MCF 10A (cell line): ENCODE measurements at regions of chr6 and their contacts with region 1.

Region 1: GRCh38 chr6:162560891-162561290 is 166.7 kb downstream of the PRKN start:
- DNase-seq: no peak
- H3K4me3 Mint-ChIP-seq: no peak overlapping the region
- H3K27ac Mint-ChIP-seq: no peak overlapping the region
- H3K4me1 Mint-ChIP-seq: no peaks in the 10 kb centered on the region
- H3K27me3 Mint-ChIP-seq: no peaks in the 10 kb centered on the region
- CTCF ChIP-seq: no peak

Region 2: GRCh38 chr6:162727309-162728182 is 166.7 kb after region 1 on chr6 and contains the starts of genes PACRG and PRKN:
- CTCF ChIA-PET with region 1: interaction called, 4 read pairs
- POLR2A ChIA-PET with region 1: no interaction called
- intact Hi-C with region 1: loop called (anchors 5 kb)
- DNase-seq: peak; percentile 98
- H3K4me3 Mint-ChIP-seq: peak within 1 kb of the TSS; percentile 86
- H3K27ac Mint-ChIP-seq: peak within 1 kb of the TSS; percentile 97
- H3K4me1 Mint-ChIP-seq: peaks cover 8% of the 10 kb centered on the region
- H3K27me3 Mint-ChIP-seq: no peaks in the 10 kb centered on the region
- CTCF ChIP-seq: no peak
- total RNA-seq, gene PACRG: not detected in 2 replicates
- total RNA-seq, gene PRKN: 2.5 and 6.0 TPM in 2 replicates

Region 3: DNA sequence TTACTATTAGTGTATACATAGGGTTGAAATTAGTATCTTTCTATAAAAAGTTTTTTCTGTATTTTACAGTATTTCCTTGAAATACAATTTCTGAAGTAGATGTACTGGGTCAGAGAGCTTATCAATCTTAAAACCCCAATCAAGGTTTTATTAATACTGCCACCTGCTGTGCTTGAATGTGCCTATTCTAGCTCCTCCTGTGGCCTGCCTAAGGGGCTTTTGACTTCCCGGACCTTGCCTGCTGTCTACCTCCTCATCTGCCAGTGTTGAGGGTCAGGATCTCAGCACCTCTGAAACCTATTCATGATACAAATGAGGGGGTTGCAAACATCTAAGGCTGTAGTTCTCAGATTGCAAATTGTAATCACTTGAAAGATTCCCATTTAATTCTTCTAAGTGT is 176.1 kb after region 1 on chr6:
- CTCF ChIA-PET with region 1: interaction called, 19 read pairs
- POLR2A ChIA-PET with region 1: no interaction called
- intact Hi-C with region 1: no loop called
- DNase-seq: peak; percentile 10
- H3K4me3 Mint-ChIP-seq: no peak overlapping the region
- H3K27ac Mint-ChIP-seq: no peak overlapping the region
- H3K4me1 Mint-ChIP-seq: no peaks in the 10 kb centered on the region
- H3K27me3 Mint-ChIP-seq: no peaks in the 10 kb centered on the region
- CTCF ChIP-seq: no peak